ENCODE measurements at regions of chr5 and their contacts with region 1.

Region 1: DNA sequence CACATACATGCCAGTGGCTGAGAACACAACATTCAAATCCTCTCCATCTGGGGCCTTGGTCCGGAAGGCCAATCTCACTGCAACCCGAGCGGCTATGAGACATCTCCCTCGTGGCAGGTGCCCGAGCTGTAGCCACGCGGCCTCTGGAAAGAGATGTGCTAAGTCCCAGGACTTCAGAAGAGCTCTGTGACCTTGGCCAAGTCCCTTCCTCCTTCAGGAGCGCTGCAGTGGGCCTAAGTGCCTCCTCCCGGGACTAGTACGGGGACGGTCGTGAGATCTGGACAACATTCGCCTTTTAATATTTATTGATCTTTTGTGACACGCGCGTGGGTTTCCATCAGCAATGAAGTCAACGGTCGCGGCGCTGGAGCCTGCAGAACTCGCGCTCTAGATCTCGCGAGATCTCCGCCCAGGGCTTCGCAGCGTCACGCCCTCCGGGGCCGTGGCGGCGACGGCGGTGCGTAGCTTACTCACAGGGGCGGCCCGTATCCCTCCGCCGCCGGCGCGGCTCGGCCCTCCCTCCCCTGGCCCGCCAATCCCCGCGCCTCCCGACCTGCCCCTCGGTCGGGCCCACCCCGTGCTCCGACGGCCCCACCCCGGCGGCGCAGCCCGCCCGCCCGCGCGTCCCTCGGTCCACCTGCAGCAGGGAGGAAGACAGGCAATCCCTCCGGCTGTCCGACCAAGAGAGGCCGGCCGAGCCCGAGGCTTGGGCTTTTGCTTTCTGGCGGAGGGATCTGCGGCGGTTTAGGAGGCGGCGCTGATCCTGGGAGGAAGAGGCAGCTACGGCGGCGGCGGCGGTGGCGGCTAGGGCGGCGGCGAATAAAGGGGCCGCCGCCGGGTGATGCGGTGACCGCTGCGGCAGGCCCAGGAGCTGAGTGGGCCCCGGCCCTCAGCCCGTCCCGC is at the start of gene UBE2D2:
- DNase-seq: peak; percentile 95
- ATAC-seq: peak; percentile 86
- H3K4me3 Mint-ChIP-seq: peak within 1 kb of the TSS; percentile 93
- H3K27ac Mint-ChIP-seq: peak within 1 kb of the TSS; percentile 95
- H3K4me1 Mint-ChIP-seq: peaks cover 41% of the 10 kb centered on the region
- H3K27me3 Mint-ChIP-seq: no peaks in the 10 kb centered on the region
- CTCF ChIP-seq: no peak
- total RNA-seq, gene UBE2D2: 152 and 172 TPM in 2 replicates

Region 2: GRCh38 chr5:139273572-139274289 is 287.3 kb before region 1 on chr5:
- CTCF ChIA-PET with region 1: no interaction called
- POLR2A ChIA-PET with region 1: no interaction called
- intact Hi-C with region 1: loop called (anchors 5 kb)
- DNase-seq: peak; percentile 93
- ATAC-seq: peak; percentile 96
- H3K4me3 Mint-ChIP-seq: peak overlapping the region; percentile 90
- H3K27ac Mint-ChIP-seq: peak overlapping the region; percentile 91
- H3K4me1 Mint-ChIP-seq: peaks cover 52% of the 10 kb centered on the region
- H3K27me3 Mint-ChIP-seq: no peaks in the 10 kb centered on the region
- CTCF ChIP-seq: no peak

Region 3: DNA sequence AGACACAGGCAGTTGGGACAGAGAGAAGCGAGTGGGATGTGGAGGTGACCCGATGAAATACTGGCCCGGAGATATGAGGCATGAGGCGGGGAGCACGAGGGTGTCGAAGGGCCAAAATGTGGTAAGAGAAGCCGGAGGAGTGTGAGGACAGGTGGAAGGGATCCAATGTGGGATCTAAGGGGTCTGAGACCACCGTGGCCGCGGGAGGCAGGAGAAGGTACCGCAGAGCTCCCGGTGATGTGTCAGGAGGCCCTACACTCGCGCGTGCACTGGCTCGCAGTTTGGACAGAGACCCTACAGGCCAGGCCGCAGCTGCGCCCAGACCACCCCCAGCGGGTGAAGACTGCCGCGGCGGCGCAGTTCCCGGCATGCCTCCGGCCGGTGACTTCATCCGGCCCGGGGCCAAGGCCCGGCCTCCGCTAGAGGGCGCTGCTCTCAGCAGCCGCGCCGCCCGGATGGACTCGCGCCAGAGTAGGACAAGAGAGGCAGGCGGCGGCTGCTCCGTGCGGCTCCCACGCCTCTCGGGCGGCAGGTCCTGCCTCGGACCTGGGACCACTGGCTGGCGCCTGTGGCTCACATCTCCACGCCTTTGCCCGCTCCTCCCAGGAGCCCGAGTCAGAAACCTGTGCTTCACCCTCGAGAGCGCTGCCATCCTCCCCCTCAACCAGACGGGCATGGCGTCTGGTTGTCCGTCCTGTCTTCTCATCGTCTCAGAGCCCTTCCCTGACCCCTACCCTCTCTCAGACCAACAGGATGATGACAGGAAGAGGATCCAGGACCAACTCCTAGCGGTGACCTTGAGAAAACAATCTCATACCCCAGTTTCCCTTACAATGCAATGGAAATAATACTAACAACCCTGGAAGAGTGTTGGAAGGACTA is 43.1 kb before region 1 on chr5:
- CTCF ChIA-PET with region 1: interaction called, 4 read pairs
- POLR2A ChIA-PET with region 1: interaction called, 37 read pairs
- intact Hi-C with region 1: loop called (anchors 1 kb)
- DNase-seq: peak; percentile 93
- ATAC-seq: peak; percentile 93
- H3K4me3 Mint-ChIP-seq: peak overlapping the region; percentile 84
- H3K27ac Mint-ChIP-seq: peak overlapping the region; percentile 89
- H3K4me1 Mint-ChIP-seq: peaks cover 19% of the 10 kb centered on the region
- H3K27me3 Mint-ChIP-seq: no peaks in the 10 kb centered on the region
- CTCF ChIP-seq: peak; percentile 57

Region 4: GRCh38 chr5:139574641-139575312 is 13.8 kb after region 1 on chr5:
- CTCF ChIA-PET with region 1: interaction called, 19 read pairs
- POLR2A ChIA-PET with region 1: interaction called, 22 read pairs
- intact Hi-C with region 1: loop called (anchors 1 kb)
- DNase-seq: no peak
- ATAC-seq: peak; percentile 70
- H3K4me3 Mint-ChIP-seq: no peak overlapping the region
- H3K27ac Mint-ChIP-seq: peak overlapping the region; percentile 42
- H3K4me1 Mint-ChIP-seq: peaks cover 81% of the 10 kb centered on the region
- H3K27me3 Mint-ChIP-seq: no peaks in the 10 kb centered on the region
- CTCF ChIP-seq: peak; percentile 28

Region 5: DNA sequence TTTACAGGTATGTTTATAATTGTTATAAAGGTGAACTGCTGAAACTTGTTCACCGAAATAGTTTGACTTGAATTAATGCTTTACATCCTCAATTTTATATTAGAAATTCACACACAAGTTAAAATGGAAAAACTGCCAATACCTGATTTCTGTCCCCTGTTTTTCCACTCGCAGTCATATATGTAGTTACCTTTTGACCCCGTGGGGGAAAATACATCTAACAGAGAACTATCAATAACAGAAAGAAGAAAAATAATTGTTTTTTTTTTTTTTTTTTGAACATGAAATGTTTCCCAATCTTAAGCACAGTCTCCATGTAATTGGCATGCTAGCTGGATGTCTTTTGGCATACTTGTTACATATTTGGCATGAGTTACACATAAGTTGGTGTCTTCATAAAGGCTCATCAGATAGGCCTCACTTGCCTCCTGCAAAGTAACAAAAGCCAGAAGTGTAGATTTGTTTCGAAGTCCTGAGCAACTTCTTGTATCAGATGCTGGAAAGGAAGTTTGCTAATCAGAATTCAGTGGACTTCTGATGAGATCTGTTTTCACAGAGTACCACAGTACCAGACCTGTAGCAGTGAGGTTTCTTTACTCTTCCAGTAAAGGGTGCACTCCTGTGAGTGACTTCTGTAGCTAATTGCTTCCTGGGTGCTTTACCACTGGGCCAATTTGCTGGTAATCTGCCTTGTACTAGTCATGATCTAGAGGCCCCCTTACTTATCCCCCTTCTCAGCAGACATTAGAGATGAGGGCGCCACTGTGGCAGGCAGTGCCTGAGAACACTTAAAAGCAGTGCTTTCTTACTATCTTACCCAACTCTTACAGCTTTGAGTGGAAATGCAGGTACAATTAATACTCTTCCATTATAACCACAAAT is 50.9 kb after region 1 on chr5:
- CTCF ChIA-PET with region 1: no interaction called
- POLR2A ChIA-PET with region 1: interaction called, 4 read pairs
- intact Hi-C with region 1: loop called (anchors 2 kb)
- DNase-seq: no peak
- ATAC-seq: no peak
- H3K4me3 Mint-ChIP-seq: no peak overlapping the region
- H3K27ac Mint-ChIP-seq: peak overlapping the region; percentile 59
- H3K4me1 Mint-ChIP-seq: peaks cover 37% of the 10 kb centered on the region
- H3K27me3 Mint-ChIP-seq: no peaks in the 10 kb centered on the region
- CTCF ChIP-seq: no peak

Region 6: DNA sequence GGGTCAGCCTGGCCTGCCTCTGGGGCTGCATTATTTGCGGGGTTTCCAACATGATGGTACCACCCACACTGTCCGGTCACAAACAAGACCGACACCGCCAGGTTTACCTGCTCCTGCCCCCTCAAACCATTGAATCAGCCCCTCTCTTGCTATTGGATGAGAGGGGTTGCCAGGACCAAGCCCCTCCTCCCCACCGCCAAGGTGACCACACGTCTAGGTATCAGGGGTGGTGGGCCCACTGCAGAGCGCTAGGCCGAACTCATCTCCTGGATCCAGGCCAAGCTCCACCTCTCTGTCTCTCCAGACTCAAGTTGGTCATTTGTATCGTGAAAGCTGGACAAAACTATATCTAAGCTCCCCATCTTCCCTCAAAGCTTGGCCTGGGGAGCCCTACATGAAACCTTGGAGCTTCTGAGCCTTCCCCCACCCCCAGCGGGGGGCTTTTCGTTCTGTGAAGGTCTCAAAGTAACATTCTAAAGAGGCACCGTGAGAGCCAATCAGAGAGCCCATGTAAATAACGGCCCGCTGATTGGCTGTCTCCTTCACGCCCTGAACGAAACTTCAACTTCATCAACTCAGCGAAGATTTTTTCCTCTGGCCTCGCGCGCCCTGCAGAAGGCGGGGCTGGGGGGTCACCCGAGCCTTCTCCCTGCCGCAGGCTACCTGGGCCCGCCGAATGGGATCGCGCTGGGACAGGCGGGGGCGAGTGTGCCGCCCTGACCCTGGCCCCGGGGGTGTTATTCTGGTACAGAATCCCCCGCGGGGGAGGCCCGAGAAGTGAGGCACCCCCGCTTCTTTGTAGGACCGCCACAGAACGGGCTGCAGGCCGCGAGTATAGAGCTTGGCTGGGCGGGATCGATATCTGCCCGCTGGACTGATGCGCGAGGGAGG is 185.0 kb after region 1 on chr5:
- CTCF ChIA-PET with region 1: no interaction called
- POLR2A ChIA-PET with region 1: interaction called, 3 read pairs
- intact Hi-C with region 1: loop called (anchors 1 kb)
- DNase-seq: peak; percentile 60
- ATAC-seq: peak; percentile 16
- H3K4me3 Mint-ChIP-seq: peak overlapping the region; percentile 89
- H3K27ac Mint-ChIP-seq: peak overlapping the region; percentile 93
- H3K4me1 Mint-ChIP-seq: peaks cover 74% of the 10 kb centered on the region
- H3K27me3 Mint-ChIP-seq: no peaks in the 10 kb centered on the region
- CTCF ChIP-seq: no peak

Region 7: DNA sequence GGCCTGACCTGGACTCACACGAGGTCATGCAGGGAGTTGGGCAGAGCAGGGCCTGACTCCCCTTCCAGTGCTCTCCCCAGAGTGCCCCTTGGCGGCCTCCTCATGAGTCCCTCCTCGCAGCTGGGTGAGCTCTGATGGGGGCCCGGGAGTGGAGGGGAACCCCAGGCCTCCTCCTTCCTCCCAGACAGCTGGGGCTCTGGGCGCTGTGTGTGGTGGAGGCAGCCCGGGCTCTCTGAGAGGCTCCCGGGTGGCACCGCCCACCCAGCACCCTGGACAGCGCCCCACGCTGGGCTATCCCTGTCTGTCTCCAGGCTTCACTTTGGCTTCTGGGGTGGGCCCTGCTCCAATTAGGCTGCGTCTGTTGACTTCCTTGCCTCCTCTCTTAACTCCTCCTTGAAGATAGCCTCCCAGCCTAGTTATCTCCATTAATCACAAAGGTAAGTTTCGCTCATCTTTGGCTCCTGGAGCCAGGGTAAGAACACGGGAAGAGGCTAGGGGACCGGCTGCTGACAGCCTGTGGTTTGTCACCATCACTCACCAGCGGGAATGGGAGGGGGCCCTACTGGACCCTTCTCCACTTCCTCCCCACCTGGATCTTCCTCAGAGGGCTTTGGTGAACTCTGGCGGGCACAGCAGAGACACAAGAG is 247.6 kb after region 1 on chr5:
- CTCF ChIA-PET with region 1: no interaction called
- POLR2A ChIA-PET with region 1: no interaction called
- intact Hi-C with region 1: no loop called
- DNase-seq: no peak
- ATAC-seq: peak; percentile 58
- H3K4me3 Mint-ChIP-seq: no peak overlapping the region
- H3K27ac Mint-ChIP-seq: no peak overlapping the region
- H3K4me1 Mint-ChIP-seq: no peaks in the 10 kb centered on the region
- H3K27me3 Mint-ChIP-seq: peaks cover 36% of the 10 kb centered on the region
- CTCF ChIP-seq: no peak